Posterior cingulate gyrus (tissue), 11 donors: ENCODE measurements at regions of chr17 and their contacts with region 1.

Region 1: GRCh38 chr17:72171703-72172667 is 51.2 kb downstream of the SOX9 start:
- DNase-seq: peak in 4 of 10 donors; percentile 37 to 89 (median 46)

Region 2: GRCh38 chr17:72126563-72127486 is 45.2 kb before region 1 on chr17:
- intact Hi-C with region 1: loop called (anchors 5 kb)
- DNase-seq: no peak